Panc1 (cell line): ENCODE measurements at regions of chr17 and their contacts with region 1.

Region 1: DNA sequence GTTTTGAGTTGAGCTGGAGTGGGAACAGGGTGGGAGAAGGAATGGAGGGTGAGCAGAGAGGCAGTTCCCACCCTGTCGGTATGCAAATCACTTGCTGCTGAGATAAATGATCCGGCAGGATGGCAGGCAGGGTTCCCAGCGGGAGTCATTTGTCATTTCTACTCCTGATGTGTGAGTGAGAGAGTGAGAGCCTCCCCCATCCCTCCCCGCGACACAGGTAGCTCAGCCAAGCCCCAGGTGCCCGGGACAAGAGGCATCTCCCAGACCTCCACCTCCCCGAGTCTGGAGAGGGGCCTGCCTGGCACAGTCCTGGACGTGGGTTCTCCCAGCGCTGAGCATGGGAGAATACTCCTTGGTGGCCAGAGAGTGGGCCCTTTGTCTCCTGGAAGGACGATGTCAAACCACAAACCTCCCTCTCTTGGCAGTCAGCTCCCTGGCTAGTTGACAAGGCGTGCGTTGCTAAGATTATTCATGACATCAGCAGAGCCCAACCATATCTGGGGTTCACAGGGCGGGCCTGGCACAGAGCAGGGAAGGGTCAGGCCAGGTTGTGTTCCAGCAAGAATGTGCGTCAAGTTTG is 33.7 kb upstream of the TNRC6C start:
- DNase-seq: no peak
- ATAC-seq: no peak
- H3K4me3 ChIP-seq: no peak overlapping the region
- H3K27ac ChIP-seq: no peak overlapping the region
- H3K4me1 ChIP-seq: no peaks in the 10 kb centered on the region
- H3K27me3 ChIP-seq: no peaks in the 10 kb centered on the region; the same call in 1 of the 2 replicates
- CTCF ChIP-seq: no peak

Region 2: DNA sequence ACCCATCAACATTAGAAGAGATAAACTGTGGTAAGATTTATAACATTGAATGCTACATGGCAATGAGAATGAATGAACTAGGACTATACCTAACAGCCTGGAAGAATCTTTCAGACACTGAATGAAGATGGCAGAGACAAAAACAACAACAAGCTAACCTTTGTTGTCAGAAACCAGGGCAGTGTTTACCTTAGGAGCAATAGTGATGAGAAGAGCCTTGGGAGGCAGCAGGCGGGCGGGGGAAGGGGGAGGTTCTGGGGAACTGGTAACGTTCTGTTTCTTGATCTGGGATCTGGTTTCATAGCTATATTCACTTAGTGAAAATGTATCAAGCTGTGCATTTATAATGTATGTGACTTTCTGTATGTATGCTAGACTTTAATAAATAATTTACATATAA is 105.3 kb before region 1 on chr17:
- CTCF ChIA-PET with region 1: no interaction called
- POLR2A ChIA-PET with region 1: interaction called, 14 read pairs
- in situ Hi-C with region 1: no loop called
- intact Hi-C with region 1: no loop called
- DNase-seq: no peak
- ATAC-seq: no peak
- H3K4me3 ChIP-seq: no peak overlapping the region
- H3K27ac ChIP-seq: no peak overlapping the region
- H3K4me1 ChIP-seq: no peaks in the 10 kb centered on the region
- H3K27me3 ChIP-seq: no peaks in the 10 kb centered on the region
- CTCF ChIP-seq: no peak

Region 3: GRCh38 chr17:77909236-77909635 is 15.6 kb before region 1 on chr17:
- CTCF ChIA-PET with region 1: no interaction called
- POLR2A ChIA-PET with region 1: no interaction called
- in situ Hi-C with region 1: no loop called
- intact Hi-C with region 1: no loop called
- DNase-seq: no peak
- ATAC-seq: no peak
- H3K4me3 ChIP-seq: no peak overlapping the region
- H3K27ac ChIP-seq: no peak overlapping the region
- H3K4me1 ChIP-seq: no peaks in the 10 kb centered on the region
- H3K27me3 ChIP-seq: peaks cover 17% of the 10 kb centered on the region
- CTCF ChIP-seq: no peak